AG04449 (cell line): ENCODE measurements at regions of chr19 and their contacts with region 1.

Region 1: GRCh38 chr19:42132851-42133528 is 744 bp upstream of the POU2F2 start:
- DNase-seq: no peak
- H3K4me3 ChIP-seq: peak overlapping the region; percentile 62
- CTCF ChIP-seq: peak; percentile 95

Region 2: GRCh38 chr19:42113641-42114348 is 19.2 kb before region 1 on chr19:
- CTCF ChIA-PET with region 1: interaction called, 92 read pairs
- POLR2A ChIA-PET with region 1: interaction called, 7 read pairs
- DNase-seq: peak; percentile 91
- H3K4me3 ChIP-seq: peak overlapping the region; percentile 10; the same call in 1 of the 2 replicates
- CTCF ChIP-seq: peak; percentile 32

Region 3: GRCh38 chr19:42121656-42122069 is 11.3 kb before region 1 on chr19:
- CTCF ChIA-PET with region 1: interaction called, 52 read pairs
- POLR2A ChIA-PET with region 1: no interaction called
- DNase-seq: no peak
- H3K4me3 ChIP-seq: no peak overlapping the region
- CTCF ChIP-seq: no peak

Region 4: DNA sequence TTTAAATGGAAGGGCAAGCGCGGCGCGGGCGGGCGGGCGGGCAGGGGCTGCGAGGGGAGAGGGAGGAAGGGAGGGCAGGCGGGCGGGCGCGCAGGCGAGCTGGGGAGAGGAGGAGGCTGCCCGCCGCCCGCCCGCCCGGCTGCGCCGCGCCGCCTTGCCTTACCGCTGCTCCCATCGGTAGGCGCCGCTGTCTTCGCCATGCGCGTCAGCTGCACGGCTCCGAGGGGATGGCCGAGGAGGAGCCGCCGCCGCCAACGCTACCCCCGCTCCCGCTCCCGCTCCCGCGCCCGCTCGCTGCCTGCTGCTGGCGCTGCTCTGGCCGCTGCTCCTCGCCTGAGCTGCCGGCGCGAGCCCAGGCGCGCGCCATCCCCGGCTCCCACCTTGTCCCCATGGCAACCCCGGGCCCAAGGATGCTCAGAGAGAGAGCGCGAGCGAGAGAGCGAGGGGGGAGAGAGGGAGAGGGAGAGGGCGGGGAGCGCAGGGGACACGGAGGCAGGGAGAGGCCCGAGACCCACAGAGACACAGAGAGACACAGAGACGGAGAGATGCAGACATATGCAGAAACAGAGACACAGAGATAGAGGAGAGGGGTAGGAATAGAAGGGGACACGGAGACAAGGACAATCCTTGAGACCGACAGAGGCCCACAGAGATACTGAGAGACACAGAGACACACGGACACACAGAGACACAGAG is 44.1 kb after region 1 on chr19:
- CTCF ChIA-PET with region 1: interaction called, 30 read pairs
- POLR2A ChIA-PET with region 1: no interaction called
- DNase-seq: no peak
- H3K4me3 ChIP-seq: peak overlapping the region; percentile 60
- CTCF ChIP-seq: peak; percentile 68

Region 5: GRCh38 chr19:42184401-42184861 is 51.4 kb after region 1 on chr19:
- CTCF ChIA-PET with region 1: interaction called, 30 read pairs
- POLR2A ChIA-PET with region 1: no interaction called
- DNase-seq: peak; percentile 62
- H3K4me3 ChIP-seq: no peak overlapping the region
- CTCF ChIP-seq: peak; percentile 91

Region 6: GRCh38 chr19:42219812-42220750 is 87.1 kb after region 1 on chr19 and contains the start of gene ZNF526:
- CTCF ChIA-PET with region 1: interaction called, 13 read pairs
- POLR2A ChIA-PET with region 1: no interaction called
- DNase-seq: peak; percentile 80
- H3K4me3 ChIP-seq: peak within 1 kb of the TSS; percentile 84
- CTCF ChIP-seq: no peak